Panc1 (cell line): ENCODE measurements at regions of chr19 and their contacts with region 1.

Region 1: GRCh38 chr19:28519952-28520861 is 692.7 kb downstream of the UQCRFS1 start:
- DNase-seq: no peak
- ATAC-seq: no peak
- H3K4me3 ChIP-seq: no peak overlapping the region
- H3K27ac ChIP-seq: no peak overlapping the region
- H3K4me1 ChIP-seq: no peaks in the 10 kb centered on the region
- H3K27me3 ChIP-seq: no peaks in the 10 kb centered on the region
- CTCF ChIP-seq: no peak

Region 2: DNA sequence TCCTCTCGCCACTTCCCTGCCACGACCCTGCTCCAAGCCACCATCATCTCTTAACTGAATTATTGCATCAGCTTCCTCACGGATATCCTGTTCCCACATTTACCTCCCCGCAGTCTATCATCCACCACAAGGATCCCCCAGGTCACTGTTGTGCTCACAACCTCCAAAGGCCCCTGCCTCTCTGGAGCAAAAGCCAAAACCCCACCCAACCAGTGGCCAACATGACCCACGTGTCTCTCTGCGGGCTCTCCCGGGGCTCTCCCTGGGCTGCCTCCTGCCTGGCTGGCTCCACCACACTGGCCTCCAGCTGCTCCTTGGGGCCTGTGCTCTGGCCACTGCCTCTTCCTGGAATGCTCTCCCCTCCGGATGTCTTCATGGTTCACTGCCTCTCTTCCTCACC is 116.5 kb before region 1 on chr19:
- CTCF ChIA-PET with region 1: no interaction called
- POLR2A ChIA-PET with region 1: interaction called, 10 read pairs
- in situ Hi-C with region 1: no loop called
- intact Hi-C with region 1: no loop called
- DNase-seq: no peak
- ATAC-seq: no peak
- H3K4me3 ChIP-seq: no peak overlapping the region
- H3K27ac ChIP-seq: no peak overlapping the region
- H3K4me1 ChIP-seq: no peaks in the 10 kb centered on the region
- H3K27me3 ChIP-seq: no peaks in the 10 kb centered on the region
- CTCF ChIP-seq: no peak

Region 3: DNA sequence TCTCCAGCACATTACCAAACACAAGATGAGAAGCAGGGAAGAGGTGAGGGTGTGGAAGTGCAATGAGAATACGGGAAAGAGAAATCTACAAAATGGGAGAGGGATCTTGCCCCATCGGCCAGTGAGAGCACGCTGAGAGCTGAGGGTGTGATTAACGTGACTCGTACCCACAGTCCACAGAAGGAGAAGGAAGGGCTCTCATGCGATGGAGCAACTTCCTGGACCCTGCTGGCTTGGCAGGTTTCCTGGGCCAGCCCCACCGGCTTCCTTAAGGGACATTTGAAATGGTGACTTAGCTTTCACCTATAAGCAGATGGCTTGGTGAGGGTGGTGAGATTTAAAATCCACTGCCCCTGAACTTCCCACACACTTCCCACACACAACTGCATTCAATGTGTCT is 47.4 kb before region 1 on chr19:
- CTCF ChIA-PET with region 1: no interaction called
- POLR2A ChIA-PET with region 1: no interaction called
- in situ Hi-C with region 1: no loop called
- intact Hi-C with region 1: no loop called
- DNase-seq: no peak
- ATAC-seq: no peak
- H3K4me3 ChIP-seq: no peak overlapping the region
- H3K27ac ChIP-seq: no peak overlapping the region
- H3K4me1 ChIP-seq: no peaks in the 10 kb centered on the region
- H3K27me3 ChIP-seq: no peaks in the 10 kb centered on the region; the same call in 1 of the 2 replicates
- CTCF ChIP-seq: no peak